ENCODE measurements at regions of chr1 and their contacts with region 1.

Region 1: GRCh38 chr1:21216835-21217811 is 40.4 kb upstream of the EIF4G3 start:
- DNase-seq: peak in 1 of 2 experiments; percentile 88
- H3K4me3 ChIP-seq: no peak overlapping the region
- H3K27ac ChIP-seq: no peak overlapping the region
- H3K4me1 ChIP-seq: peaks cover 0 to 5% (median 5%) of the 10 kb centered on the region in 4 experiments; a peak in 5 of 7 replicates
- H3K27me3 ChIP-seq: no peaks in the 10 kb centered on the region
- CTCF ChIP-seq: peak; percentile 60 to 86 (median 80)
- EP300 ChIP-seq: no peak
- POLR2A ChIP-seq: no peak
- RAD21 ChIP-seq: peak; percentile 43 to 67; a peak in 3 of 4 replicates

Region 2: DNA sequence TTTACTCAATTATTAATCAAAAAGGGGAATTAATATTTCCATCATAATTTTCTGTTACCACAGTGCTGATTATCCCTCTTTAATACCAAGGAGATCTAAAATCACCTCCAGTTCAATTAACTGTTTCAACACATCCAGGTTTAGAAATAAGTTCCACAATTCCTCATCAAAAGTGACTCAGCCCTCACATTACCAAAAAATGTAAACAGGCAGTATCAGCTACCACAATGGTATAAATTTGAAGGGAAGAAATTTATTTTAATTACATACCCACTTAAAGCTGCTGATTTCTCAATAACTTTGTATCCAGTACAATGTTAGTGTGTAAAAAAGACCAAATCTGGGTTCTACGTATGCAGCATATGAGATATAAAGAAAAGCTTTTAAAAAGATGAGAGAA is 92.3 kb before region 1 on chr1:
- CTCF ChIA-PET with region 1: no interaction called
- POLR2A ChIA-PET with region 1: no interaction called
- DNase-seq: no peak
- H3K4me3 ChIP-seq: no peak overlapping the region
- H3K27ac ChIP-seq: no peak overlapping the region
- H3K4me1 ChIP-seq: peaks cover 0 to 2% (median 1%) of the 10 kb centered on the region in 4 experiments; a peak in 2 of 7 replicates
- H3K27me3 ChIP-seq: no peaks in the 10 kb centered on the region
- CTCF ChIP-seq: no peak
- EP300 ChIP-seq: no peak
- POLR2A ChIP-seq: no peak
- RAD21 ChIP-seq: no peak

Region 3: GRCh38 chr1:21184276-21184675 is 32.8 kb before region 1 on chr1:
- CTCF ChIA-PET with region 1: interaction called, 15 read pairs
- POLR2A ChIA-PET with region 1: no interaction called
- DNase-seq: no peak
- H3K4me3 ChIP-seq: no peak overlapping the region
- H3K27ac ChIP-seq: no peak overlapping the region
- H3K4me1 ChIP-seq: no peaks in the 10 kb centered on the region
- H3K27me3 ChIP-seq: peaks cover 28 to 59% (median 52%) of the 10 kb centered on the region in 4 experiments
- CTCF ChIP-seq: no peak
- EP300 ChIP-seq: no peak
- POLR2A ChIP-seq: no peak
- RAD21 ChIP-seq: no peak

Region 4: DNA sequence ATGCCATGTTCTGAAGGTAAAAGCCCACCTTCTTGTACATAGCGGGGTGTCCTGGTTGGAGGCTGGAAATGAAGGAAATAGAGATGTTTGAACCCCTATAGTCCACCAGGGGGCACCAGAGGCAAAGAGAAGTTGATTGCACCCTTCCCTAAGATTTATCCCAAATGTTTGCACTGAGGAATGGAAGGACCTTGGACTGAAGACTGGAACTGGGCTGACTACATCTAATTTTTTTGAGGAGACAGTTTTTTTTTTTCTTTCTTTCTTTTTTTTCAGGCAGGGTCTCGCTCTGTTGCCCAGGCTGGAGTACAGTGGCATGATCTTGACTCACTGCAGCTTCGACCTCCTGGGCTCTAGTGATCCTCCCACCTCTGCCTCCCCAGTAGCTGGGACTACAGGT is 14.9 kb after region 1 on chr1:
- CTCF ChIA-PET with region 1: interaction called, 108 read pairs
- POLR2A ChIA-PET with region 1: no interaction called
- DNase-seq: peak in 1 of 2 experiments; percentile 59
- H3K4me3 ChIP-seq: no peak overlapping the region
- H3K27ac ChIP-seq: no peak overlapping the region
- H3K4me1 ChIP-seq: no peaks in the 10 kb centered on the region
- H3K27me3 ChIP-seq: no peaks in the 10 kb centered on the region
- CTCF ChIP-seq: peak; percentile 25 to 75 (median 75)
- EP300 ChIP-seq: no peak
- POLR2A ChIP-seq: no peak
- RAD21 ChIP-seq: peak; percentile 89 to 90

Region 5: DNA sequence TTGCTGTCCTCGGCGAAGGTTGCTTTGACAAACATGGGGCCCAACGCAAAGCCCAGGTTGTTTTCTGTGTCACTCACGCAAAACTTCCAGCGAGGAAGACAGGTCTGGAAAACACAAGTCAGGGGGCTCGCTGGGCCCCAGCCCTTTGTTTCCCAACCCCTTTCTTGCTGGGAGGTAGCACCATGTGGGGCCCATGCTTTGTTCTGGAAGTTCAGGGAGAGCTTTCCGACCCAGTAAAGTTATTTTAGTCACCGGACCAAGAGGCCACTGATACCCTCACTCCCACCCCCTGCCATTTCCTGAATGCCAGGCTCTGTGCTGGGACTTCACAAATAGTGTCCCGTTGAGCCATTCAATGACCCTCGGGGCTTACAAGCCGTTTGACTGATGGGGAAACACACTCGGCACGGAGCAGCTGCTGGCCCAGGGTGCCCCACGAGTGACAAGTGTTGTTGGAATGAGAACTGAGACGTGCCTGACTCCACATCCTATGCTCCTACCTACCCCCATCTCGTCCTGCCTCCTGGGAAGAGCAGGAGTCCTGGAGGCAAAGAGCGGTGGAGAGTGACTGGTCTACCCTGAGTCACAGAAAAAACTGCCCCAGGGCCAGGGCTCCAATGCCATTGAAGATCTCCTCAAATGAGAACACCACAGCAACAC is 21.1 kb after region 1 on chr1:
- CTCF ChIA-PET with region 1: interaction called, 108 read pairs
- POLR2A ChIA-PET with region 1: no interaction called
- DNase-seq: no peak
- H3K4me3 ChIP-seq: no peak overlapping the region
- H3K27ac ChIP-seq: no peak overlapping the region
- H3K4me1 ChIP-seq: peaks cover 0 to 8% (median 5%) of the 10 kb centered on the region in 4 experiments; a peak in 4 of 7 replicates
- H3K27me3 ChIP-seq: no peaks in the 10 kb centered on the region
- CTCF ChIP-seq: no peak
- EP300 ChIP-seq: no peak
- POLR2A ChIP-seq: no peak
- RAD21 ChIP-seq: no peak

Measured in H1 (cell line).